HCT116 (cell line): ENCODE measurements at regions of chr15 and their contacts with region 1.

Region 1: GRCh38 chr15:55649054-55649423 is 60.9 kb upstream of the PYGO1 start:
- DNase-seq: no peak
- ATAC-seq: no peak
- H3K4me3 ChIP-seq: no peak overlapping the region
- H3K27ac ChIP-seq: no peak overlapping the region
- H3K4me1 ChIP-seq: no peaks in the 10 kb centered on the region
- H3K27me3 ChIP-seq: no peaks in the 10 kb centered on the region
- CTCF ChIP-seq: no peak
- POLR2A ChIP-seq: no peak
- RAD21 ChIP-seq: no peak

Region 2: DNA sequence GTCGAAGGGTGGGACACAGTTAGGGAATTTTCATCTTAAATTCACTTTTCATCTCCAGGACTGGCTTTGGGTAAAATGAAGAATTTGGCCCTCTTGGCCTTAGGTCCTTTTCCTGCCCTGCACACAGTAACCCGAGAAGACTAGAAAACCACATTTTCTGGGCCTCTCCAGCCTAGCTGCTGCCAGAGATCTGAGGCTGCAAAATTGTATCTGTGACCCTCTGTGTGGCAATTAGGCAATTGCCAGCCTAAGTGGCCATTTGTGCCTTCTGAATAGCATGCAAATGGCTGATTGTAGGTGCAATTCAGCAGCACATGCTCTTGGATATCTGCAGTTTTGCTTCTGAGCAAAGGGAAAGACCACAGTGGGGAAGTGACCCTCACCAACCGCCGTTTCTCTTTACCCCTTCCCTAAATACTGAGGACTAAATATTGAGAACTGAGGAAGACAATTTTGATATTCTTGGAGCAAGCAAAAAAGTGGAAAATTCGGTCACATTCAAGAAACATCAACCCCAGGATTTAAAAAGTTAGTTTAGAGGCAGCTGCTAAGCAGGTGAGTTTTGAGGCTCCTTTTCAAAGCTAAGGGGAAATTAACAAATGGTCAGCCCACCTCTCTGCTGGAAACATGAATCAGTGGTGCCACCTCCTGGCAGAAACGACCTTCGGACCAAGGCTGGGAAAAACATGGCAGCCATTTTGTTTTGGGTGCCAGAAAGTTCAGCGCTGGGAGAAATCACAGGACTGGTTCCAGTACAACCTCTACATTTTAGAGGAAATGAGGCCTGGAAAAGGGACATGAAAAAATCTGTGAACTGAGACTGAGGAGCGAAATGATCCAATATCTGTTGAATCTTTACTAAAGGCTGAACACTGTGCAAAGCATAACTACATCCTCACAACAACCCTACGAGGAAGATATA is 150.5 kb after region 1 on chr15:
- CTCF ChIA-PET with region 1: interaction called, 53 read pairs
- POLR2A ChIA-PET with region 1: no interaction called
- RAD21 ChIA-PET with region 1: no interaction called
- intact Hi-C with region 1: loop called (anchors 1 kb)
- DNase-seq: peak; percentile 32
- ATAC-seq: peak; percentile 86
- H3K4me3 ChIP-seq: no peak overlapping the region
- H3K27ac ChIP-seq: no peak overlapping the region
- H3K4me1 ChIP-seq: peaks cover 0 to 8% of the 10 kb centered on the region in 2 experiments; a peak in 2 of 4 replicates
- H3K27me3 ChIP-seq: no peaks in the 10 kb centered on the region
- CTCF ChIP-seq: peak; percentile 72 to 83 (median 74)
- POLR2A ChIP-seq: no peak
- RAD21 ChIP-seq: peak; percentile 82

Region 3: GRCh38 chr15:55846116-55846707 is 197.2 kb after region 1 on chr15:
- CTCF ChIA-PET with region 1: interaction called, 11 read pairs
- POLR2A ChIA-PET with region 1: no interaction called
- RAD21 ChIA-PET with region 1: interaction called in 1 of 2 experiments, 6 read pairs
- intact Hi-C with region 1: loop called (anchors 1 kb)
- DNase-seq: peak; percentile 57
- ATAC-seq: peak; percentile 84
- H3K4me3 ChIP-seq: no peak overlapping the region
- H3K27ac ChIP-seq: no peak overlapping the region
- H3K4me1 ChIP-seq: no peaks in the 10 kb centered on the region
- H3K27me3 ChIP-seq: no peaks in the 10 kb centered on the region
- CTCF ChIP-seq: peak; percentile 53 to 94 (median 84); a peak in 5 of 6 replicates
- POLR2A ChIP-seq: no peak
- RAD21 ChIP-seq: peak; percentile 67

Region 4: GRCh38 chr15:55897560-55898336 is 248.7 kb after region 1 on chr15:
- CTCF ChIA-PET with region 1: interaction called, 6 read pairs
- POLR2A ChIA-PET with region 1: no interaction called
- RAD21 ChIA-PET with region 1: no interaction called
- intact Hi-C with region 1: loop called (anchors 1 kb)
- DNase-seq: no peak
- ATAC-seq: peak; percentile 97
- H3K4me3 ChIP-seq: no peak overlapping the region
- H3K27ac ChIP-seq: peak overlapping the region; percentile 34
- H3K4me1 ChIP-seq: peaks cover 8 to 9% of the 10 kb centered on the region in 2 experiments
- H3K27me3 ChIP-seq: no peaks in the 10 kb centered on the region
- CTCF ChIP-seq: peak; percentile 55 to 94 (median 93); a peak in 5 of 6 replicates
- POLR2A ChIP-seq: no peak
- RAD21 ChIP-seq: peak; percentile 60

Region 5: GRCh38 chr15:56052395-56053045 is 403.5 kb after region 1 on chr15:
- CTCF ChIA-PET with region 1: no interaction called
- POLR2A ChIA-PET with region 1: no interaction called
- RAD21 ChIA-PET with region 1: no interaction called
- intact Hi-C with region 1: loop called (anchors 1 kb)
- DNase-seq: peak; percentile 57
- ATAC-seq: peak; percentile 86
- H3K4me3 ChIP-seq: no peak overlapping the region
- H3K27ac ChIP-seq: no peak overlapping the region
- H3K4me1 ChIP-seq: no peaks in the 10 kb centered on the region
- H3K27me3 ChIP-seq: no peaks in the 10 kb centered on the region
- CTCF ChIP-seq: peak; percentile 57 to 78 (median 63); a peak in 5 of 6 replicates
- POLR2A ChIP-seq: no peak
- RAD21 ChIP-seq: peak; percentile 74

Region 6: GRCh38 chr15:56245871-56246814 is 597.1 kb after region 1 on chr15:
- CTCF ChIA-PET with region 1: interaction called, 5 read pairs
- POLR2A ChIA-PET with region 1: no interaction called
- RAD21 ChIA-PET with region 1: no interaction called
- intact Hi-C with region 1: loop called (anchors 2 kb)
- DNase-seq: peak; percentile 82
- ATAC-seq: peak; percentile 76
- H3K4me3 ChIP-seq: peak overlapping the region; percentile 35 to 53
- H3K27ac ChIP-seq: peak overlapping the region; percentile 1; the same call in 1 of the 2 replicates
- H3K4me1 ChIP-seq: peaks cover 9 to 28% of the 10 kb centered on the region in 2 experiments
- H3K27me3 ChIP-seq: no peaks in the 10 kb centered on the region
- CTCF ChIP-seq: peak; percentile 100
- POLR2A ChIP-seq: peak; percentile 26
- RAD21 ChIP-seq: peak; percentile 81

Region 7: GRCh38 chr15:56428821-56429458 is 779.9 kb after region 1 on chr15:
- CTCF ChIA-PET with region 1: no interaction called
- POLR2A ChIA-PET with region 1: no interaction called
- RAD21 ChIA-PET with region 1: no interaction called
- intact Hi-C with region 1: loop called (anchors 5 kb)
- DNase-seq: peak; percentile 10
- ATAC-seq: peak; percentile 44; the same call in 1 of the 2 replicates
- H3K4me3 ChIP-seq: no peak overlapping the region
- H3K27ac ChIP-seq: no peak overlapping the region
- H3K4me1 ChIP-seq: no peaks in the 10 kb centered on the region
- H3K27me3 ChIP-seq: no peaks in the 10 kb centered on the region
- CTCF ChIP-seq: peak; percentile 33 to 72 (median 66); a peak in 5 of 6 replicates
- POLR2A ChIP-seq: no peak
- RAD21 ChIP-seq: peak; percentile 73